ENCODE measurements at regions of chr17 and their contacts with region 1.

Region 1: DNA sequence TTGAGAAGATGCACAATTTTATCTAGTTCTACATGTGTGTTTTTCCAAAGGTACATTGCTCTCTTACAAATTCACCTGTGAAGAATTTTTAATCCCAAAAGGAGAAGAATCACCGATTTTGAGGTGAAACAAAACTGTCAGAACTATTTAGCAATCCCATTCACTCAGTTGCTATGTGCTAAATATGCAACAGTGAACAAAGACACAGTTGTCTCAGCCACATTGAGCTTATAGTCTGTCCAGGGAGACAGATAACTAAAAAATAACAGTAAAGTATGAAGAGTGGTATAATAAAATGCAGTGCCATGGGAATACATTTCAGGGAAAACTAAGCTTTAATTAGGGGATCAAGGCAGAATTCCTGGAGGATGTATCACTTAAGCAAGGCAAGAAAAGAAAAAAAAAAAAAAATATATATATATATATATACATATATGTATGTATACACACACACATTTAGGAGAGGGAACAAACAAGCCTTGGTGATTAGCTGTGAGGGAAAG is 110.4 kb downstream of the SPAG9 start:
- DNase-seq: no peak
- ATAC-seq: no peak
- H3K4me3 ChIP-seq: no peak overlapping the region
- H3K4me3 Mint-ChIP-seq: no peak overlapping the region
- H3K27ac ChIP-seq: no peak overlapping the region
- H3K27ac Mint-ChIP-seq: no peak overlapping the region
- H3K4me1 ChIP-seq: no peaks in the 10 kb centered on the region
- H3K4me1 Mint-ChIP-seq: no peaks in the 10 kb centered on the region
- H3K27me3 ChIP-seq: no peaks in the 10 kb centered on the region
- H3K27me3 Mint-ChIP-seq: no peaks in the 10 kb centered on the region
- CTCF ChIP-seq: no peak

Region 2: DNA sequence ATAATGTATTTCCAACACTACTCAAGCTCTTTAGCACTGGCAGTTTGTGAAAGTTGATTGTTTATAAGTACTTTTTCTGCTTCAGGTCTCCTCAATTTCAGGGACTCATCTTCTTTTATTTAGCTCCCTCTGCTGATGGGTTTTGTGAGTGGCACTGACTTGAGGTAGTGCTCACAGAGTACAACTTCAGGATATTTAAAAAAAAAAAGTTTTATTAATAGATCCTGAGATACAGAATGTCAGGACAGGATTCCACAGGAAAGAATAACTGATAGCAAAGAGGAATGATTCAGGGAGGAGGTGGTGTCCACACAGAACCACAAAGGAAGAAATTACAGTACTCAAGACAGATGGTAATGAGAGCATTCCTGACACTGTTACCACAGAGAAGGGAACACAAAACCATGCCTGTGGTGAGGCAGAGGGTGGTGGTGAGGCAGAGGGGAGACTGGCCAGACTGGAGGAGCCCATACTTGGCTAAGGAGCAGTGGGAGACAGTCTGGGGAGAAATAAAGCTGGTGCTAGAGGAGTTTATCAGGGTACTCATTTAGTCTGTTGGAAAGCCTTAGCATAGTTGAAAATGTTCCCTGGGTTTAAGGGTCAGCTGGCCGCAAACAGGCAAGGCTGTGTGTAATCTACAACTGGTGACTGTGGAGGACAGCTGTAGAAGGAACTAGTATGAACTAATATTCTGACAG is 46.7 kb after region 1 on chr17:
- CTCF ChIA-PET with region 1: interaction called, 11 read pairs
- POLR2A ChIA-PET with region 1: no interaction called
- intact Hi-C with region 1: no loop called
- DNase-seq: peak in 9 of 14 experiments; percentile 3 to 62 (median 12)
- ATAC-seq: no peak
- H3K4me3 ChIP-seq: no peak overlapping the region
- H3K4me3 Mint-ChIP-seq: no peak overlapping the region
- H3K27ac ChIP-seq: no peak overlapping the region
- H3K27ac Mint-ChIP-seq: no peak overlapping the region
- H3K4me1 ChIP-seq: no peaks in the 10 kb centered on the region
- H3K4me1 Mint-ChIP-seq: peaks cover 17% of the 10 kb centered on the region
- H3K27me3 ChIP-seq: no peaks in the 10 kb centered on the region
- H3K27me3 Mint-ChIP-seq: no peaks in the 10 kb centered on the region
- CTCF ChIP-seq: peak; percentile 53